Ascending aorta (tissue), 2 donors: ENCODE measurements at regions of chr6 and their contacts with region 1.

Region 1: GRCh38 chr6:134063966-134064445 is 11.6 kb upstream of the SLC2A12 start:
- DNase-seq: peak in 1 of 2 donors; percentile 84
- H3K4me3 ChIP-seq: no peak overlapping the region
- H3K27ac ChIP-seq: no peak overlapping the region
- H3K4me1 ChIP-seq: peaks cover 10 to 21% of the 10 kb centered on the region in 2 donors
- H3K27me3 ChIP-seq: no peaks in the 10 kb centered on the region
- CTCF ChIP-seq: peak; percentile 66 to 90 (median 88)

Region 2: GRCh38 chr6:133502441-133503259 is 561.4 kb before region 1 on chr6:
- intact Hi-C with region 1: loop called (anchors 10 kb)
- DNase-seq: peak in 1 of 2 donors; percentile 87
- H3K4me3 ChIP-seq: no peak overlapping the region
- H3K27ac ChIP-seq: peak overlapping the region; percentile 71 to 74
- H3K4me1 ChIP-seq: peaks cover 0 to 25% of the 10 kb centered on the region in 2 donors
- H3K27me3 ChIP-seq: no peaks in the 10 kb centered on the region
- CTCF ChIP-seq: no peak

Region 3: DNA sequence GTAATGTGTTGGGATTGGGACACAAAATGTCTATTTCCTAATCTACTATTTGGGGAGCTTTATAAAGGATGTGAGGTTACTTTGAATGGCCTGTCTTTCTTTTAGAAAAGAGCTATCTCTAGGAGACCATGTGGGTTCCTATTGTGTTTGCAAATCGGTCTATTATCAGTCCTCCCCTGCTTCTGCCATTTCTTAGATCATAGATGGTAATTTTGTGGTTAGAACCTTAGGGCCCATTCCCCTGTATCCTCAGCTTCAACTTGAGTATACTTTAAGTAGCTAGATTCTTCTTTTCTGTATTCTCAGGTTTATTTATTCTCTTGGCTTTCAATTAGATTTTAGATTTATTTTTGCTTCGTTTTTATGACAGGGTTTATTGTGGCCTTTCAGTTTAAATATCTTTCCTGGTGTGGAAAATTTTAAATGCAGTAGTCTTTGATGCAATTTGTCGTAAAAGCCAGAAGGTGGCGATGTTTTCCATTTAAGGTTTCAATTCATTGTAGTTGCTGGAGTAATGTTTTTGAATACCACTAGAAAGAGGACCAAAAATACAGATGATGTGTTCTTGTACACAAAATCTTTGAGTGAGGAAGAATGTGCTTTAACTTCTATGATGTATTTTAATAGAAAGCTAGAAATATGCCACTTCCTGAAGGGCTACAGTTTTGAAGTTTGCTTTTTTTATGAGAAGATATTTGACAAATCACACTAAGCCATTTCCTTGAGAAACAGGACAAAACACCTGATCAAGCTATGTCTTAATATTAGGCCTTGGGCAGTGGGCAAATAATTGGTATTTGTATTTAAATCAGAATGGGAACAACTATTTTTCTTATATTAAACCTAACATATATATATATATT is 90.7 kb before region 1 on chr6:
- intact Hi-C with region 1: loop called (anchors 1 kb)
- DNase-seq: no peak
- H3K4me3 ChIP-seq: no peak overlapping the region
- H3K27ac ChIP-seq: peak overlapping the region in 1 of 2 donors; percentile 4
- H3K4me1 ChIP-seq: peaks cover 0 to 6% of the 10 kb centered on the region in 2 donors
- H3K27me3 ChIP-seq: no peaks in the 10 kb centered on the region
- CTCF ChIP-seq: peak in 2 of 3 experiments; percentile 76 to 77

Region 4: DNA sequence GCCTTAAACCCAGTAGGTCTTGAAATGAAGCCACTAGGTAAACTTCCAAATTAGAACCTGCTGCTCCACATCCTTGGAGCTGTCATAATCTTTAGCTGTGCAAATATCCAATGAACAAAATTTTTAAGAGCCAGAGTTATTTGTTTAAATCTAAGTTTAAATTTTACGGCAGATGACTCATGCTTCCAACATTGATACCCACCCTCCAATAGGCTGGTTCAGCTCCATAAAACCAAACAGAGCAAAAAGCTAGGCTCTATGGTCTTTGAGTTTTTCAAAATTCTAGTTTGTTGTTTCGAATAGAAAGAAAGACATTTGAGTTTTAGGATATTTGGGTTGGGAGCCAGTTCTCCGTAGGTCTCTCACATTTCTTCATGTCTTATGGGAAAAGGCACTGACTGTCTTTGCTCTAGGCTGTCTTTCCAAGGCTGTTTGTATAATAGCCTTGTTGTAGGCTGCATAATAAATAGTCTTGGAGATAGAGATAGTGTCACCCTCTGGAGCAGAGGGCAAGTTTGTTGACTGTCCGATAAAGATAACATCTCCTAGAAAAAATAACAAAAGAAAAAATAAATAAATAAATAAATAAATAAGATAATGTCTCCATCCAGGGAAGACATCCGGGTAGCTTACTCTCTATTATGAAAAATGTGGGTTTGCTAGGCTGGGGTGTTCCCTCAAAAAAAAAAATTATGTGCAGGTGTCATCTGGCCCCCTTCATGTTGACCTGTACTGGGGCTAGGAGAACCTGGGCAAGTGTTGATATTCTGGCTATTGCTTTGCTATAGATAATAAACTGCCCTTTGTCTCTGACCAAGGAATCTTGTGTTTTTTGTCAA is 48.1 kb before region 1 on chr6:
- intact Hi-C with region 1: loop called (anchors 5 kb)
- DNase-seq: no peak
- H3K4me3 ChIP-seq: no peak overlapping the region
- H3K27ac ChIP-seq: no peak overlapping the region
- H3K4me1 ChIP-seq: peaks cover 0 to 2% of the 10 kb centered on the region in 2 donors
- H3K27me3 ChIP-seq: no peaks in the 10 kb centered on the region
- CTCF ChIP-seq: no peak

Region 5: DNA sequence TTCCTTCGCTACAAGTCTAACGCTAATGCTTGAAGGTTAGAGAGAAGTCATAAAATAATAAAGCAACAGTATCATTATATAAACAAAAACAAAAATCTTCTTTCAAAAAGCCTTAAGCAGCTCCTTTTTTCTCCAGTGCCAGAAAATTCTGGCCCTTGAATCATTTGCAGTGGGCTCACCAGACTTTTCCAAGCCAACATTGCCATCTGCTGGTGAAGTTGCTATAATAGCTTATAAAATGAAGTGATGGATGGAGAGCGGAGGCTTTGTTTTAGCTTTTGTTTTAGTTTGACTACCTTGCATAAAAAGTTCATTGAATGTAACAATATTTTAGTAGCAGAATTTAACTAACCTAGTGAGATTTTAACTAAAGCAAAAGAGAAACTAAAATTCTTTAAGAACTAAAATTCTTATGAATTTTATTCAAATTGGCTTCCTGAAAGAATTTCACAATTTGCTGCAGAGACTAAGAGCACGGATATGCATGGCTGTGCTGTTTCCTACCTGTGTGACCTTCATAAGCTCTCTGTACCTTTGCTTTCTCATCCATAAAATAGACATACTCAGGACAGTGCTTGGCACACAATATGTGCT is 33.2 kb after region 1 on chr6:
- intact Hi-C with region 1: loop called (anchors 1 kb)
- DNase-seq: peak in 1 of 2 donors; percentile 80
- H3K4me3 ChIP-seq: no peak overlapping the region
- H3K27ac ChIP-seq: no peak overlapping the region
- H3K4me1 ChIP-seq: no peaks in the 10 kb centered on the region
- H3K27me3 ChIP-seq: no peaks in the 10 kb centered on the region
- CTCF ChIP-seq: peak; percentile 31 to 76 (median 54)